Cardiac septum (tissue), 1 donor: ENCODE measurements at regions of chr9 and their contacts with region 1.

Region 1: DNA sequence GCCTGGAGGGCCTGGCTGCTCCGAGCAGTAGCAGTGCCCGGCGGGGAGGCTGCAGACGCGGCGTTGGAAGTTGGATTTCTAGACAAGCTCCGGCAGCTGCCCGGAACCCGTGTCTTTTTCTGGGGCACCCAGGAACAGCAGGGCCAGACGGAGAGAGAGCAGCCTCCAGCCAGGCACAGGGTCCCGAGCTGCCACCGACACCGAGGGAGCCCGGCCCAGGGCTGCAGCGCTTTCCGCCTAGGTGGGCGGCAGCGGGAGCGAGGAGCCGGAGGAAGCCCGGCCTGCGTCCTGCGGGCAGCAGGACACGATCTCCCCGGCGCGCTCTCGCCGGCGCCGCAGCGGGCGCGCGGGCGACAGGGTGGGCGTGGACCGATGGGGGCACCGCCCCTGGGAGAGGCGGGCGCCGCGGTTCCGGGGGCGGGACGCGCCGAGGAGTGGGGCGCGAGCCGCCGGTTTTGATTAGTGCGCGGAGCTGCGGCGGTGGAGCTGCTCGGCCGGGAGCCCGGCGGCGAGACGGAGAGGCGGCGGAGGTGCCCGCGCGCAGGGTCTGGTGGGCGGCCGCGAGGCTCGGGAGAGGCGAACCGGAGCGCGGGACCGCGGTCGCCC is at the start of gene UGCG:
- DNase-seq: peak; percentile 96
- total RNA-seq, gene UGCG: 28.6 TPM

Region 2: DNA sequence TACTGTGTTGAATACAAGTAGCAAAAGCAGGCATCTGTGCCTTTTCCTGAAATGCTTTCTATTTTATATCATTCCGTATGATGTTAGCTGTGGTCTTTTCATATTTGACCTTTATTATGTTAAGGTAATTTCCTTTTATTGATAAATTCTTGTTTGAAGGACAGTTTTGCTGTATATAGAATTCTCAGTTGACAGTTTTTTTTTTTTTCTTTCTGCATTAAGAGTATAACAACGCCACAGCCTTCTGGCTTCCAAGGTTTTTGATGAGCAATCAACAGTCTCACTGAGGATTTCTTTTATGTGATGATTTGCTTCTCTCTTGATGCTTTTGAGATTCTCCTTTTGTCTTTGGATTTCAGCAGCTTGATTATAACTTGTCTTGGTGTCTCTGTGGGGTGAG is 347.8 kb before region 1 on chr9:
- intact Hi-C with region 1: no loop called
- DNase-seq: no peak

Region 3: GRCh38 chr9:111759762-111760639 is 136.5 kb before region 1 on chr9:
- intact Hi-C with region 1: loop called (anchors 5 kb)
- DNase-seq: no peak

Region 4: DNA sequence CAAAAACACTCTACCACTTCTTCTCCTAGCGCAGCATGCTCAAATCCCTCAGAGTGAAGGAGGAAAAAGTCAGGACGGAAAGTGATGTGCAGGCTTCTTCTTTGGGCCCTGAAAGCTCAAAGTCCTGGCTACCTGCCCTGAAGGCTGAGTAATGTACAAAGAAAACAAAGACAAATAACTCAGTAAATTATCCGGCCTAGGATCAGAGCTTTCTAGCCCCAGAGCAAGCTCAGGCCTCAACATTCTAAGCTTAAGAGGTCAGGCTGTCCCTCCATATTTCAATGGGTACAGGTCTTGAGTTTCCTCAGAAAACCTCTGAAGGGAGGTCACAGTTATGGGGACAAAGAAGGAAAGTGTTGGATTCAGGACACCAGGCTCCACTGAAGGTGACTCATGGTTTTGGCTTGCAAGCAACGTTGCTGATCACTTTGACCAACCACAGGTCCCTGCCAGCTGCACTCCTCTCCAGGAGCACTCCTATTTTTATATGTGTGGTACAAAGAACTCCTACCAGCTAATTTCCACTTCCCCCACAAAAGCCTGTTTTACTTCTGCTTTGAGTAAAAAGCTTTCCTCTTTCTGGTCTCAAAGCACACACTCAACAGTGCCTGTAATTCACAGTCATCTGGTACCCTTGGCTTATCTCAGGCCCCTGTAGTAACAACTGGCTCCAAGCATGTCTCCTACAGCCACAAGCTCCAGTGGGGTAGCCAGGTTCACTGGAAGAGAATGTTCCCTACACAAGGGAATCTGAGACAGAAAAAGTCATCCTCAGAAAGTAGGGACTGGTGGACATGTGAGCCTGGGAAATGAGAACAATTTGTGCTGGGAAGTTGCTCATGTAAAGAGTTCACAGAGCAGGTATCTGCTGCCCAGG is 115.8 kb after region 1 on chr9:
- intact Hi-C with region 1: loop called (anchors 10 kb)
- DNase-seq: no peak

Region 5: GRCh38 chr9:112074250-112075008 is 178.0 kb after region 1 on chr9:
- intact Hi-C with region 1: loop called (anchors 2 kb)
- DNase-seq: no peak

Region 6: DNA sequence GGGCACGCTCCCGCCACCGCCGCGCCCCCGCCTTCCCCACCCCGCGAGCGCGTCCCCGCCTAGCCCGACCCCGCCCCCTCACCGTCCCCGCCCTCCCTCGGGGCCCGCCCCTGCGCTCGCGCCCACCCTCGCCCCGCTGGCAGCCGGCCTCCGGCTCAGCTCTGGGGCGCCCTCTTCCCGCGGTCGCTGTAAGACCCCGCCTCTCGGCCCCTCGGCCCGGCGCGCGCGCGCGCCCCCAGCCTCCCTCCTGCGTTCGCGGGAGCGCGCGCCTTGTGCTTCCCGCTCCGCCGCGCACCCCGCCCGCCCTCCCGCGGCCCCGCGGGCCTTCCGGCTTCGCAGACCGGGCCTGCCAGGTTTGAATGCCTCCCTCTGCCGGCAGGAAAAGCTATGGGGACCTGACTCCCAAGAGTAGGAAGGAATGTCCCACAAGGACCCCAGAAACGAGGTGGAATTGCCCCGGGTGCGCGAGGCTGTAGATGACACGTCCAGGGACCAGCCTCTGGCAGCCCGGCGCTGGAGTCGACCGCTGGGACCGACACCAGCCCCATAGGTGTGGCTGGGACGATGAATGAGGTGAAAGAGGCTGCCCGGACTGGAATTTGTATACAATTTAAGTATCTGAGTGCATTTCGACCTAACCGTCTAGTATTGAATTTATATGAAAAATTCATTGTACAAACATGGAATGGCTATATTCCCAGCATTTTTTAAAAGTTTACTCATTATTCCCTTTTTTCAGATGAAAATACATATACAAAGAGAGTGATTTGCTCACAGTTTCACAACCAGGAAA is 437.4 kb after region 1 on chr9:
- intact Hi-C with region 1: loop called (anchors 5 kb)
- DNase-seq: peak; percentile 98

Region 7: GRCh38 chr9:112955550-112955949 is 1059.1 kb after region 1 on chr9:
- intact Hi-C with region 1: no loop called
- DNase-seq: no peak